ENCODE measurements at regions of chr5 and their contacts with region 1.

Region 1: GRCh38 chr5:138138949-138139780 is at the start of gene NME5:
- DNase-seq: peak; percentile 57 to 61
- ATAC-seq: peak; percentile 82 to 95 (median 92)
- H3K4me3 ChIP-seq: peak within 1 kb of the TSS; percentile 33 to 78 (median 64)
- H3K27ac ChIP-seq: peak within 1 kb of the TSS in 1 of 10 donors; percentile 19
- H3K4me1 ChIP-seq: peaks cover 0 to 12% (median 0%) of the 10 kb centered on the region in 9 donors
- H3K27me3 ChIP-seq: peaks cover 0 to 44% (median 0%) of the 10 kb centered on the region in 7 donors
- CTCF ChIP-seq: no peak
- total RNA-seq, gene NME5: 2.0 to 5.9 (median 3.9) TPM

Region 2: DNA sequence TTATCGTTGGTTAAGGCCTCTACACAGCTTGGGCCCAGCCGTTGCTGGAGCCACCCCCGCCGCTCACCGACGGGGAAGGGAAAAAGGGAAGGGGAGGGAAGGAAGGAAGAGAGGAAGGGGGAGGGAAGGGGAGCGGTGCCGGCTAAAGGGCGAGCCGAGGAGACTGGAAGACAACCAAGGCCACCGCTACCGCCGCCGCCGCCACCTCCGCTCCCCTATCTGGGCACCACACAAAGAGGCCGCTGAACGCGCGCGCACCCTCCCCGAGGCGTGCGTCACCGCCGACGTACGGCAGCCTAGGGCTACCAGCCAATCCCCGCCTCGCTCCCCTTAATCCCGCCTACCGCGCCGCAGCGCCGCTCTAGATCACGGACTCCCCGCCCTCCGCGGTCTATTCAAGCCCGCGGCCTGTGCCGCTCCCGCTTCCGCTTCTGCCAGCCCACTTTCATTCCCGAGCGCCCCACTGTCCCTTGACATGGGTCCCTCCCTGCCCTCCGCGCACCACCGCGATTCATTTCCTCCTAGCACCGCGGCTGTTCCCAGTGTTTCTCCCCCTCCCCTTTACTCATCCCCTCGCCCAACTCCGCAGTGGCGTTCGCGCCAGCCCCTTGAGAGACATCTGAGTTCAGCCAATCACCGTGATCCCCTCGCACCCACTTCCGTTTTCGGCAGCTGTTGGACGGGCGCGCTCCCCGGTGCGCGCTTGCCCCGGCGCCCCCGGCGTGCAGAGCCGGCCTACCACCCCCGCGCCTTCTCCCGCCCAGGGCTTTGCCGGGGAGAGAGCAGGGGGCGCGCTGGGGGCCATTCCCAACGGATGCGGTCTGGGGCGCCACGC is 384.8 kb before region 1 on chr5 and contains the start of gene HNRNPA0:
- intact Hi-C with region 1: loop called in 2 of 10 experiments (anchors 10 kb)
- DNase-seq: peak; percentile 96 to 97
- ATAC-seq: peak; percentile 95 to 98 (median 96)
- H3K4me3 ChIP-seq: peak within 1 kb of the TSS; percentile 69 to 97 (median 88)
- H3K27ac ChIP-seq: peak within 1 kb of the TSS; percentile 92 to 100 (median 99)
- H3K4me1 ChIP-seq: peaks cover 4 to 39% (median 37%) of the 10 kb centered on the region in 9 donors
- H3K27me3 ChIP-seq: no peaks in the 10 kb centered on the region
- CTCF ChIP-seq: peak in 2 of 9 donors; percentile 28 to 30
- total RNA-seq, gene HNRNPA0: 12.4 to 23.8 (median 17.4) TPM

Region 3: DNA sequence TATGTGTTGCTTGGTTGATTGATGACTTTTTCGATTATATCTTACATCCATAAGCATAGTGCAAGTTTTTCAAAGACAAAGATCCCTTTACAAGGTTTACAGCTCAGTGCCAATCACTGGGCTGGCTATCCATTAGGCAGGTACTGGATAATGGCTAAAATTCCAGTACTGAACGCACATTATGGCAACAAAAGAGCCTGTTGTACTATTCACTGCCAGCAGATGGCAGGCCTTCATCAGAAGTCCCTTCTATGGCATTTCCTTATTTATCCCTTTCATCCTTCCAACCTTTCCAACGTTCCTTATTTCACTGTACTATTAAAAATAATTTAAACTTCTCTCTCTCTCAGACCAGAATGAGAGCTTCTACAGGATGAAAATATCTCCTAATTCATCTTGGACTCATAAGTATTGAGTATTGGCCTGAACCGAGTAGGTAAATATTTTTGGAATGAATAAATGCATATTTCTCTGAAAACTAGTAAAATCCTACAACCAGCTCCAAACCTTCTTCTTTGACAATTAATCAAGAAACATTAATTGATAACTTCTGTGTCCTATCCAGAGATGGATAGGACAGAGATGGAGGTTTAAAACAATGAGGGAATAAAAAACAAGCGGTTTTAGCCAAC is 62.0 kb before region 1 on chr5:
- intact Hi-C with region 1: loop called in 4 of 10 experiments (anchors 5 kb)
- DNase-seq: peak in 1 of 2 donors; percentile 49
- ATAC-seq: peak in 6 of 8 donors; percentile 35 to 68 (median 62)
- H3K4me3 ChIP-seq: no peak overlapping the region
- H3K27ac ChIP-seq: no peak overlapping the region
- H3K4me1 ChIP-seq: no peaks in the 10 kb centered on the region
- H3K27me3 ChIP-seq: peaks cover 0 to 6% (median 0%) of the 10 kb centered on the region in 7 donors
- CTCF ChIP-seq: peak; percentile 50 to 93 (median 85)

Measured in heart right ventricle (tissue), 16 donors.